Activated CD8-positive, alpha-beta T cell treated with anti-CD3 and anti-CD28 coated beads for 36 hours (primary cell): ENCODE measurements at regions of chr20 and their contacts with region 1.

Region 1: DNA sequence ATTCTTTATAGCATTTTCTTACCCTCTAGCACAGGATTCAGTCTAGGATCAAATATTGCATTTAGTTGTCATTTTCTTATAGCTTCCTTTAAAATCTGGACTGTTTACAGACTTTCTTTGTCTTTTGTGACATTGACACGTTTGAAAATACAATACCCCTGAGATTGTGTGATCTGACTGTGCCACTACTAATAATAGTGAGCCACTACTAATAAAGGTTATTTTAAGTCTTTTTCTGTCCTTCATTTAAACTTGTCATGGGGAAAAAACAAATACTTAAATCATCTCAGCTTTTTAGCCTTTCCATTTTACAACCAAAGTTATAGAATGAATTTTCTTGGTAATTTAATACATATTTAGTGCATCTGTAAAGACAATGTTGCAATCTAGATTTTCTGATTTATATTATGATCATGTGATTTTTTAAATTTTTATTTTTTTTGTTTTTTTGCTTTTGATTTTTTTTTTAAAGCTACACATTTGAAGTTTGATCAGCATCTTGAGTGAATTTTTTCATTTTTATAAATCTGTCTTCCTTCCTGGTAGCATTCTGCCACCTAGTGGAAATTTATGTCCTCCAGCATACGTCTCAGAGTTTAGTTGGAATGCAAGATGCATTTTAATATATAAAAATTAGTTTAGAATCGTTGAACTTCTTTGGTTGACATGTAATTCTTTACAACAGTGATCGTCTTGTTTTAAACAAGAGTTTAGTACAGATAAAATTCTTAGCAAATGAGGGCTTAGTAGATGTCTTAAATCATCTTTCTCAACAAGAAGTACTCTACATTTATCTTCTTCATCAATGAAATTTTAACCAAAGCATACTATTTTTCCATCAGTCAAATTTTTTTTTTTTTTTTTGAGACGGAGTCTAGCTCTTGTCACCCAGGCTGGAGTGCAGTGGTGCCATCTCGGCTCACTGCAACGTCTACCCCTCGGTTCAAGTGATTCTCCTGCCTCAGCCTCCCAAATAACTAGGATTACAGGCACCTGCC is 119.4 kb downstream of the NCOA3 start:
- DNase-seq: peak; percentile 21
- ATAC-seq: peak; percentile 58
- H3K4me3 Mint-ChIP-seq: no peak overlapping the region
- H3K27ac Mint-ChIP-seq: peak overlapping the region; percentile 71
- H3K4me1 Mint-ChIP-seq: peaks cover 37% of the 10 kb centered on the region
- H3K27me3 Mint-ChIP-seq: no peaks in the 10 kb centered on the region
- CTCF ChIP-seq: peak; percentile 95

Region 2: GRCh38 chr20:47487175-47487917 is 133.8 kb before region 1 on chr20:
- CTCF ChIA-PET with region 1: interaction called, 10 read pairs
- POLR2A ChIA-PET with region 1: interaction called, 3 read pairs
- intact Hi-C with region 1: no loop called
- DNase-seq: peak; percentile 84
- ATAC-seq: peak; percentile 87
- H3K4me3 Mint-ChIP-seq: peak overlapping the region; percentile 54
- H3K27ac Mint-ChIP-seq: peak overlapping the region; percentile 100
- H3K4me1 Mint-ChIP-seq: peaks cover 61% of the 10 kb centered on the region
- H3K27me3 Mint-ChIP-seq: no peaks in the 10 kb centered on the region
- CTCF ChIP-seq: no peak

Region 3: GRCh38 chr20:47600967-47601547 is 20.1 kb before region 1 on chr20:
- CTCF ChIA-PET with region 1: interaction called, 14 read pairs
- POLR2A ChIA-PET with region 1: no interaction called
- intact Hi-C with region 1: no loop called
- DNase-seq: no peak
- ATAC-seq: no peak
- H3K4me3 Mint-ChIP-seq: no peak overlapping the region
- H3K27ac Mint-ChIP-seq: peak overlapping the region; percentile 18
- H3K4me1 Mint-ChIP-seq: peaks cover 58% of the 10 kb centered on the region
- H3K27me3 Mint-ChIP-seq: no peaks in the 10 kb centered on the region
- CTCF ChIP-seq: no peak

Region 4: DNA sequence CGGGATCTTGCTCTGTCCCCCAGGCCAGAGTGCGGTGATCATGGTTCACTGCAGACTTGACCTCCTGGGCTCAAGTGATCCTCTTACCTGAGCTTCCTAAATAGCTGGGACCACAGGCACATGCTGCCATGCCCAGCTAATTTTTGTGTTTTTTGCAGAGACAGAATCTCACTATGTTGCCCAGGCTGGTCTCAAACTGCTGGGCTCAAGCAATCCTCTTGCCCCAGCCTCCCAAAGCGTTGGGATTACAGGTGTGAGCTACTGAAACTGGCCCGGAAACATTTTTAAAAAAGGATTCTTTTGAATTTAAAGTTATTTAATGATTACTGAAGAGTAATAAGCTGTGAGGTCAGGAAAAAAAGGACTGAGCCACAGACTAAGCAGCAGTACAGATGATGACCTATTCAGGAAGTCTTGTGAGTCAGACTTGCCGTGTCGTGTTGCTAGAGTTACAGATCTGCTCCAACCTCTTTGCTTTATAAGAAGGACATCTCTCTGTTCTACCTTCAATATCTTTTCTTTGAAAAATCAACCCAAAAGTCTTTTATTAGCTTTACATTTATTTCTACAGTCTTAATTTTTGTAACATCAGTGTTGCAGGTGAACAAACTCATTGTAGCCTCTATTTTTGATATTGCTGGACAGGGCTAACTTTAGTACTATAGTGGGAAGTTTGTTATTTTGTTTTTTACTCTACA is 10.7 kb before region 1 on chr20:
- CTCF ChIA-PET with region 1: interaction called, 38 read pairs
- POLR2A ChIA-PET with region 1: interaction called, 4 read pairs
- intact Hi-C with region 1: no loop called
- DNase-seq: peak; percentile 99
- ATAC-seq: peak; percentile 88
- H3K4me3 Mint-ChIP-seq: peak overlapping the region; percentile 68
- H3K27ac Mint-ChIP-seq: peak overlapping the region; percentile 96
- H3K4me1 Mint-ChIP-seq: peaks cover 86% of the 10 kb centered on the region
- H3K27me3 Mint-ChIP-seq: no peaks in the 10 kb centered on the region
- CTCF ChIP-seq: no peak